GM10248 (cell line): ENCODE measurements at regions of chr10 and their contacts with region 1.

Region 1: DNA sequence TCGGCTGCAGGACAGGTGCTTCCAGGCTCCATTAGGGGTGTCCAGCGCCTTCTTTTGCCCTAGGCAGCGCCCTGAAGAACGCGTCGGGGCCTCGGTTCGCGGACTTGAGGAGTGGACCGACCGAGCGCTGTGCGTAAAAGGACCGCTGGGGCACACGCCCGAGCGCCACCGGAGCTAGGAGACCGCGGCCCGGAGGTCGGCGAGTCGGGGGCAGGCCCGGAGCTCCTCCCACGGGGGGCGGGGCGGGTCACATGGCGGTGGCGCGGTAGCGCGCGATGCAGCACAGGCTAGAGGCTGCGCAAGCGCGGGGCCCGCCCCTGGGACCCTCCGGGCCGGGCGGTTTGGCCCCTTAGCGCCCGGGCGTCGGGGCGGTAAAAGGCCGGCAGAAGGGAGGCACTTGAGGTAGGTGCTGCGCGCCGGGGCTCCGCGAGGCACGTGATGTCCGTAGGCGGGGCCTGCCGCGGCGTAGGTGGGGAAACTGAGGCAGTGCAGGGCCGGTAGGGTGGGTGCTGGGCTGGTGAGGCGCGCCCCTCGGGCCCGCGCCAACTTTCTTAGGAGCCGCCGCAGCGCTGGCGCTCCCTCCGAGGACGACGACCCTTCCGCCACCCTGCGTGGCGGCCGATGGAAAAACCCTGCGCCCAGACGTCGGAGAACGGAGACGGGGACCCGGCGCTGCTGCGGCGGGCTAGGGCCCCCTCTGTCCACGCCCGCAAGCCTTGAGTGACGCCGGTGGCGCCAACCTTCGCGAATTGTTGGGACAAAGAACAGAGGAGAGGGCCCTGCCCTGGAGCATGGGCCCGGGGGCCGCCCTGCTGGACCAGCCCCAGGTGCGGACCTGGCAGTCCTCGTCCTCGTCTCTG is at the start of gene PRXL2A:
- DNase-seq: peak; percentile 96
- CTCF ChIP-seq: peak; percentile 0

Region 2: GRCh38 chr10:80350251-80350650 is 58.2 kb before region 1 on chr10:
- CTCF ChIA-PET with region 1: no interaction called
- POLR2A ChIA-PET with region 1: no interaction called
- DNase-seq: no peak
- CTCF ChIP-seq: no peak

Region 3: DNA sequence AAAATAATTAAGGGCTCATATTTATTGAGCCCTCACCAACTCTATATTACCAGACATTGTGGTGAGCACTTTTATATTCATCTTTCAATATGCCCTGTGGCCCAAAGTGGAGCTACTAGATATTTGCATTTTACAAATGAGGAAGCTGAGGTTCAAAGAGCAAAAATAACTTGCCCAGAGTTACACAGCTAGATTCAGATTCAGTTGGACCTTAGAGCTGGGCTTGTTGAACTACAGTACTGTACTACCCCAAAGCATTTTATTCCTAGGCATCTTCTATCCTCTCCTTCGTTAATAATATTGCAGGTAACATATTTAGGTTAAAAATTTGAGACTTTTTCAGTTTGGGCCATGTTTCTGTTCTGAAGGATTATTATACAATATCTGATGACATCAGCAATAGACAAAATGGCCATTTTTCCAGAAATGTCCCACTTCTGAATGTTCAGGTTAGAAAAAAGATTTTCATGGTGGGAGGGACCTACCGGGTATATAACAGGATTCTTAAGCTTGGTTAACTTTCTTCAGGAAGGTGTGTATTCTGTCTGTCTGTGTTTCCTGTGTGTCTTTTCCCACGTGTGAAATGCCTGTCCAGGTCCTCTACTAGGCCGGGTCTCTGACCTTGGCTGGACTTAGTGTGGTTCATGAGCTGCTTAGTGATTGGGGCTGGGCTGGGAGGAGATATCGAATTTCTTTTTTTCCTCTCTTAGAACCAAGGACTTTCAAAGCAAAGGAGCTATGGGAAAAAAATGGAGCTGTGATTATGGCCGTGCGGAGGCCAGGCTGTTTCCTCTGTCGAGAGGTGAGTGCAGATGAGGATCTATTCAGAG is 13.4 kb after region 1 on chr10:
- CTCF ChIA-PET with region 1: interaction called, 24 read pairs
- POLR2A ChIA-PET with region 1: interaction called, 8 read pairs
- DNase-seq: peak; percentile 55
- CTCF ChIP-seq: no peak

Region 4: GRCh38 chr10:81428456-81429134 is 1020.1 kb after region 1 on chr10:
- CTCF ChIA-PET with region 1: no interaction called
- POLR2A ChIA-PET with region 1: no interaction called
- DNase-seq: no peak
- CTCF ChIP-seq: no peak